ENCODE measurements at regions of chr1 and their contacts with region 1.

Region 1: DNA sequence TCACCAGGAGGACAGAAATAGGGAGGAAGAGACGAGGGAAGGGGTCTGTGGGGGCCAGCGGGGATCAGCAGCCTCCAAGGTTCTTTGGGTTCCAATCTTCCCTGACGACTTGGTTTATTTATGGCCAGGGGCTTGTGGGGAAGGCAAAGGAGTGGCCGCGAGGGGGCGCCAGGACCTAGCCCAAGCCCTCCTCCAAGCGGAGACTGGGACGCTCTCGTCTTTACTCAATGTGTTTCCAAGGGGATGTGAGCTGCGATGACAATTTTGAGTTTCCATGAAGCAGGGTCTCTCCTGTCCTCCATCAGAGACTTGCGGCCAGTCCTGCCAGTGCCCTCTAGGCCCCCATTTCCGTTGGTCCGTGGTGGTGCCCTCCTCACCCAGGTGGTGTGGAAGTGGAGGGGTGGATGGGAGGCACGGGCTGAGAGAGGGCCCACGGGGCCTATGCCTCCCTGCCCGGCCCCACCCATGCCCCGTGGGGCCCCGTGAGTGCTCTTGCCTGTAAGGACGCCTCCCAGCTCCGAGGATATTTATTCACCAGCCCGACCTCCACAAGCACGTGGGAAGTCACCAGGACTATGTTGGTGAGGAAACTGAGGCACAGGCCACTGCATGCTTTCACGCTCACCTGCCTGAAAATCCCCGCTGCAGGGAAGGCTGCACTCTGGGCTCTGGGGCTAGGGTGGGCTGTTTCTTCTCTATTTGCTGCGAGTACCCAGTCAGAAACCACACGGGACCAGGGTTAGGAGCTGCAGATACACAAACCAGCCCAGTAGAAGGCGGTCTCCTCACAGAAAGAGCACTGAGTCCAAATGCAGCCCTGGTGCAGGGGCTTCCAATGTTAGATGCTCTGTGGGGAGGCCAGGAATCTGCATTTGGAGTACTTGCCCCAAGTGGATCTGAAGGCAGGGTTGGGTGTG is 26.5 kb downstream of the DMRTB1 start:
- DNase-seq: peak; percentile 61 to 87 (median 67)
- H3K4me3 ChIP-seq: no peak overlapping the region
- H3K27ac ChIP-seq: no peak overlapping the region
- H3K4me1 ChIP-seq: no peaks in the 10 kb centered on the region
- H3K27me3 ChIP-seq: no peaks in the 10 kb centered on the region
- CTCF ChIP-seq: peak; percentile 31 to 56 (median 51)
- EP300 ChIP-seq: no peak
- POLR2A ChIP-seq: no peak

Region 2: DNA sequence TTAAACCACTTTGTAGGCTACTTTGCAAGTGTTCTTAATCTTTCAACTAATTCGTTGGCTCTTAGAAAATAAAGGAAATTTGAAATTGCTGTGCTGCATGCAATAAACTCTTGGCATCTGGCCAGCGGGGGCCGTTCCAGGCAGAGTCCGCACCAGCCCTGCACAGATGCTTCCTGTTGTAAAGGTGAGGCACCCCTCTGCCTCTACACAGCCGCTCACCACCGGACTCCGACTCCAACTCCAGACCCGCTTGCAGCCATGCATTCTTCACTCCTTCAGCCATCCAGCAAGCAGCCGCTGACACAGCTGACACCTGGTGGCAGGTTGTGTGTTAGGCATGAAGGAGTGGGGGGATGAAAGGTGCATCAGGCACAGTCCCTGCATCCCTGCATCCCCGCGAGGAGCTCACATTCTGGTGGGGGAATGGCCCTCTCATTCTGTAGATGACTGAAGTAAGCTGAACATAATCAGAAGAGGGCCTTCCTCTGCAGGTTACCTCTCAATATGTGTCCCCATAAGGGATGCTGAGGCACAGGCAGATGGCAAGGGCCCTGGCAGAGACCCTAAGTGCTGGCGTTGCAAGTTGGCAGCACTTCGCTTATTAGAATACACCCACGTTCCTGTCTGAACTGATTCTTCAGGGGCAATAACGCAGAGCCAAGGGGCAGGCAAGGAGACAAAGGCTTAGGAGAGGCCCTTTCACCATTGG is 196.4 kb after region 1 on chr1:
- intact Hi-C with region 1: loop called in 1 of 4 experiments (anchors 10 kb)
- DNase-seq: peak; percentile 33 to 58 (median 41)
- H3K4me3 ChIP-seq: no peak overlapping the region
- H3K27ac ChIP-seq: no peak overlapping the region
- H3K4me1 ChIP-seq: no peaks in the 10 kb centered on the region
- H3K27me3 ChIP-seq: no peaks in the 10 kb centered on the region
- CTCF ChIP-seq: no peak
- EP300 ChIP-seq: no peak
- POLR2A ChIP-seq: no peak

Region 3: GRCh38 chr1:53754484-53755312 is 269.0 kb after region 1 on chr1:
- intact Hi-C with region 1: loop called in 3 of 4 experiments (anchors 2 to 10 kb)
- DNase-seq: peak in 1 of 5 donors; percentile 29
- H3K4me3 ChIP-seq: no peak overlapping the region
- H3K27ac ChIP-seq: no peak overlapping the region
- H3K4me1 ChIP-seq: no peaks in the 10 kb centered on the region
- H3K27me3 ChIP-seq: no peaks in the 10 kb centered on the region
- CTCF ChIP-seq: peak in 1 of 3 donors; percentile 20
- EP300 ChIP-seq: no peak
- POLR2A ChIP-seq: no peak

Region 4: DNA sequence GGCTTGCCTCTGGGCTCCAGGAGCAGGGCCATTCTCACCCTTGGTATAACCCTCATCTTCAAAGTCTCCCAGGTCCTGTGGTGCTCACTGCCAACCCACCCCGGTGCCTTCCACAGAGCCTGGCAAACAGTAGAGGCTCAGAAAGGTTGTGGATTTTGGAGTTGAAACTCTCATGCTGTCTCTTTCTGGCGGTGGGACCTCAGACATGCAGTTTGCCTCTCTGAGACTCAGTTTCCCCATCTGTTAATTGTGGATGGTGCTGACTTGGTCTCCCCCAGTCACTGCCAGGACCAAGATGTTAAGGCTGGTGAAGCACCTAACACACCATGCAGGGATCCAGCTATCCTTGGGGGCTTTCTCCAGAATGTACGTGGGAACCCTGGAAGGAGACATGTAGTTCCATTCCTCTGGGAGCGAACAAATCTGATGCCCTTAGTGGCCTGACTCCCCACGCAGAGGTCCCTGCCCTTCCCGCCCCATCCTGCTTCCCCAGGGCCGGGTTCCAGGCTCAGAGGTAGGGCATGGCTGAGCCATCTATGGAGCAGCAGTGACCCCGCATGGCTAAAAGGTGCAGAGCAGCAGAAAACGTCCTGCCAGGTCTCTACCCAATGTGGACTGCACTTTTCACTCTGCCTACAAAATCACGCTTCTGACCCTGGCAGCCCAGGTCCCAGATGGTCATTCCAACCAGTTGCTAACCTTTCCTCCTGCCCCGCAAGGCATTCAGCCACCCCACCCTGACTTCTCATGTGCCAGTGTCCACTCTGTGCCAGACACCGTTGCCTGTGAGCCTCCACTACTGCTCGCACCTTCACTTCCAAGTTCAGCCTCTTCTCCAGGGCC is 1324.6 kb after region 1 on chr1:
- intact Hi-C with region 1: loop called in 1 of 4 experiments (anchors 5 kb)
- DNase-seq: peak; percentile 48 to 80 (median 64)
- H3K4me3 ChIP-seq: no peak overlapping the region
- H3K27ac ChIP-seq: no peak overlapping the region
- H3K4me1 ChIP-seq: no peaks in the 10 kb centered on the region
- H3K27me3 ChIP-seq: no peaks in the 10 kb centered on the region
- CTCF ChIP-seq: peak; percentile 39 to 84 (median 76)
- EP300 ChIP-seq: no peak
- POLR2A ChIP-seq: no peak

Measured in ovary (tissue), 10 donors.